Ovary (tissue), 10 donors: ENCODE measurements at regions of chr19 and their contacts with region 1.

Region 1: DNA sequence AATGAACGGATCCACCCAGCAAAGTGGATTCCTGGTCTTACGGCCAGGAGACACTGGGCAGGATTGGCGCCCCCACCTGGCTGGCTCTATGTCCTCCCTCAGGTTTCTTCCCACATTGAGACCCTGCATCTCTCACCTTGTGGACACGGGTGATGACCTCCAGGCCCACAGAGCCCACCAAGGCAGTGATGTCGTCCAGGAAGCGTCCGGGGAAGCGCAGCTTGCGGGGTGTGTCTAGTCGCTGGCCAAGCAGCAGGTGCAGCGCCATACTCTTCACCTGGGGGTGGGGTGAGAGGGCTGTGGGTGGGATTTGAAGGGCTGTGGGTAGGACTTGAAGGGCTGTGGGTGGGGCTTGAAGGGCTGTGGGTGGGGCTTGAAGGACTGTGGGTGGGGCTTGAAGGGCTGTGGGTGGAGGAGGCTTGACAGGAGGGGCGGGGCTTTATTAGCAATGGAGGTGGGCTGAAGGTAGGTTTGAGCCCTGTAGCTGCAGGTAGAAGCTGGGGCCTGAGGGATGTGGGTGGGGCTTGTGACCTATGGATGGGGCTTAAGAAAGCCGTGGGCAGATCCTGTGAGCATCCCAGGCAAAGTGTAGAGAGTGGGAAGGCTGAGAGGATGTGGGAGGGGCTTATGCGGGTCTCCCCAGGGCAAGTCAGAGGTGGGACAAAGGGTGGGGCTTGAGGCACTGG is 12.1 kb upstream of the ANGPTL8 start:
- DNase-seq: no peak
- H3K4me3 ChIP-seq: no peak overlapping the region
- H3K27ac ChIP-seq: no peak overlapping the region
- H3K4me1 ChIP-seq: no peaks in the 10 kb centered on the region
- H3K27me3 ChIP-seq: no peaks in the 10 kb centered on the region
- CTCF ChIP-seq: no peak
- EP300 ChIP-seq: no peak
- POLR2A ChIP-seq: no peak

Region 2: GRCh38 chr19:11288343-11288742 is 61.0 kb after region 1 on chr19:
- intact Hi-C with region 1: loop called in 1 of 4 experiments (anchors 10 kb)
- DNase-seq: no peak
- H3K4me3 ChIP-seq: no peak overlapping the region
- H3K27ac ChIP-seq: no peak overlapping the region
- H3K4me1 ChIP-seq: no peaks in the 10 kb centered on the region
- H3K27me3 ChIP-seq: no peaks in the 10 kb centered on the region
- CTCF ChIP-seq: no peak
- EP300 ChIP-seq: no peak
- POLR2A ChIP-seq: no peak